B cell (primary cell): ENCODE measurements at regions of chr2 and their contacts with region 1.

Region 1: GRCh38 chr2:219597552-219598307 is at the start of gene STK11IP:
- DNase-seq: peak; percentile 96
- ATAC-seq: peak; percentile 88
- H3K4me3 ChIP-seq: peak within 1 kb of the TSS; percentile 69 to 88 (median 86)
- H3K4me3 Mint-ChIP-seq: peak within 1 kb of the TSS; percentile 98
- H3K27ac ChIP-seq: peak within 1 kb of the TSS; percentile 59 to 88
- H3K27ac Mint-ChIP-seq: peak within 1 kb of the TSS; percentile 98
- H3K4me1 ChIP-seq: peaks cover 10 to 12% of the 10 kb centered on the region in 2 donors
- H3K4me1 Mint-ChIP-seq: peaks cover 23% of the 10 kb centered on the region
- H3K27me3 ChIP-seq: peaks cover 0 to 11% (median 0%) of the 10 kb centered on the region in 4 experiments
- H3K27me3 Mint-ChIP-seq: peaks cover 10% of the 10 kb centered on the region
- CTCF ChIP-seq: no peak
- total RNA-seq, gene STK11IP: 55.6 and 60.8 TPM in 2 replicates

Region 2: GRCh38 chr2:218671654-218672566 is 925.8 kb before region 1 on chr2 and contains the starts of genes RNF25 and STK36:
- CTCF ChIA-PET with region 1: no interaction called
- POLR2A ChIA-PET with region 1: no interaction called
- intact Hi-C with region 1: loop called (anchors 5 kb)
- DNase-seq: peak; percentile 85
- ATAC-seq: peak; percentile 95
- H3K4me3 ChIP-seq: peak within 1 kb of the TSS; percentile 66 to 96 (median 84)
- H3K4me3 Mint-ChIP-seq: peak within 1 kb of the TSS; percentile 97
- H3K27ac ChIP-seq: peak within 1 kb of the TSS; percentile 8 to 84
- H3K27ac Mint-ChIP-seq: peak within 1 kb of the TSS; percentile 91
- H3K4me1 ChIP-seq: peaks cover 14 to 15% of the 10 kb centered on the region in 2 donors
- H3K4me1 Mint-ChIP-seq: peaks cover 20% of the 10 kb centered on the region
- H3K27me3 ChIP-seq: no peaks in the 10 kb centered on the region
- H3K27me3 Mint-ChIP-seq: no peaks in the 10 kb centered on the region
- CTCF ChIP-seq: no peak
- total RNA-seq, gene RNF25: 31.7 and 31.8 TPM in 2 replicates
- total RNA-seq, gene STK36: 41.3 and 42.9 TPM in 2 replicates

Region 3: DNA sequence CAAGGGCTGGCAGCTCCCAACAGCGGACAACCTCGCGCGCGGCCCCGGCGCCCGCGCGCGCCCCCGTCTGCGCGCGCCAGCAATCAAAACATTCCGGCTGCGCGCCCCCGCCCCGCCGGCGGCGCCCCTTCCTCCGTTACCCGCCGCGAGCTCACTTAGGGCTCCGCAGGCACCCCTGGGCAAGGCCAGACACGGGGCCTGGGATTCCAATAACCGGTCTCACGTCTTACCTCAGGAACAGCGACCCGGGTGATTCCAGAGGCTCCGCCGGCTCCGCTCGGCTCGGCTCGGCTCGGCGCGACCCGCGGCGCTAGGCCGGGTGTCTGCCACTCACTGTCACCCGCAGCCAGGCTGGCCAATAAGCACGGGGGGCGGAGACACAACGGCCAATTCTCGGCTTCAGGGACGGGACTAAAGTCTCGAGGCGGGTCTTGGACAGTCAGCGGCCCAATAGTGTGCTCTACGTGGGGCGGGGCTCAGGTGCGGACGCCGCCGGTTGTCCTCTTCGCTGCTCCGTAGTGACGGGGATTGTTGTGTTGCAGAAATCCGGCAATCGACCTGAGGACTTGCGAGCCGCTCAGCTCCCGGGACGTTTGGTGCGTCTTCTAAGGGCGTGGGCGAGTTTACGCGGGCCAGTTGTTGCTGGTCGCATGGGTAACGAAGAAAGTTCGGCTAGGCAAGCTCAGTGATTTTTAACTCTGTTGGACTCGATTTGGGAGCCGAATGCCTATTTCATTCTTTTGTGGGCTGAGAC is 368.2 kb before region 1 on chr2 and contains the starts of genes ANKZF1 and ATG9A:
- CTCF ChIA-PET with region 1: no interaction called
- POLR2A ChIA-PET with region 1: no interaction called
- intact Hi-C with region 1: loop called (anchors 5 kb)
- DNase-seq: peak; percentile 98
- ATAC-seq: peak; percentile 97
- H3K4me3 ChIP-seq: peak within 1 kb of the TSS; percentile 86 to 98 (median 92)
- H3K4me3 Mint-ChIP-seq: peak within 1 kb of the TSS; percentile 99
- H3K27ac ChIP-seq: peak within 1 kb of the TSS; percentile 74 to 87
- H3K27ac Mint-ChIP-seq: peak within 1 kb of the TSS; percentile 98
- H3K4me1 ChIP-seq: peaks cover 17 to 23% of the 10 kb centered on the region in 2 donors
- H3K4me1 Mint-ChIP-seq: peaks cover 38% of the 10 kb centered on the region
- H3K27me3 ChIP-seq: no peaks in the 10 kb centered on the region
- H3K27me3 Mint-ChIP-seq: no peaks in the 10 kb centered on the region
- CTCF ChIP-seq: no peak
- total RNA-seq, gene ANKZF1: 181 and 199 TPM in 2 replicates
- total RNA-seq, gene ATG9A: 59.4 and 65.5 TPM in 2 replicates

Region 4: GRCh38 chr2:219498280-219499057 is 99.3 kb before region 1 on chr2 and contains the start of gene GMPPA:
- CTCF ChIA-PET with region 1: interaction called, 4 read pairs
- POLR2A ChIA-PET with region 1: no interaction called
- intact Hi-C with region 1: loop called (anchors 1 kb)
- DNase-seq: peak; percentile 94
- ATAC-seq: peak; percentile 96
- H3K4me3 ChIP-seq: peak within 1 kb of the TSS; percentile 65 to 90 (median 79)
- H3K4me3 Mint-ChIP-seq: peak within 1 kb of the TSS; percentile 93
- H3K27ac ChIP-seq: peak within 1 kb of the TSS in 1 of 2 donors; percentile 84
- H3K27ac Mint-ChIP-seq: peak within 1 kb of the TSS; percentile 87
- H3K4me1 ChIP-seq: peaks cover 38% of the 10 kb centered on the region in 2 donors
- H3K4me1 Mint-ChIP-seq: peaks cover 32% of the 10 kb centered on the region
- H3K27me3 ChIP-seq: peaks cover 0 to 46% (median 23%) of the 10 kb centered on the region in 4 experiments
- H3K27me3 Mint-ChIP-seq: peaks cover 33% of the 10 kb centered on the region
- CTCF ChIP-seq: no peak
- total RNA-seq, gene GMPPA: 27.8 and 32.0 TPM in 2 replicates

Region 5: GRCh38 chr2:219543601-219544358 is 54.0 kb before region 1 on chr2 and contains the starts of genes CHPF and TMEM198:
- CTCF ChIA-PET with region 1: interaction called, 3 read pairs
- POLR2A ChIA-PET with region 1: no interaction called
- intact Hi-C with region 1: loop called (anchors 1 kb)
- DNase-seq: peak; percentile 93
- ATAC-seq: peak; percentile 80
- H3K4me3 ChIP-seq: peak within 1 kb of the TSS in 4 of 5 experiments; percentile 63 to 78 (median 67)
- H3K4me3 Mint-ChIP-seq: peak within 1 kb of the TSS; percentile 83
- H3K27ac ChIP-seq: peak within 1 kb of the TSS in 1 of 2 donors; percentile 35
- H3K27ac Mint-ChIP-seq: peak within 1 kb of the TSS; percentile 50
- H3K4me1 ChIP-seq: peaks cover 29 to 31% of the 10 kb centered on the region in 2 donors
- H3K4me1 Mint-ChIP-seq: peaks cover 24% of the 10 kb centered on the region
- H3K27me3 ChIP-seq: peaks cover 0 to 82% (median 21%) of the 10 kb centered on the region in 4 experiments
- H3K27me3 Mint-ChIP-seq: peaks cover 40% of the 10 kb centered on the region
- CTCF ChIP-seq: no peak
- total RNA-seq, gene CHPF: 1.2 and 1.3 TPM in 2 replicates
- total RNA-seq, gene TMEM198: 0.39 TPM in 1 of 2 replicates, not detected in the other

Region 6: GRCh38 chr2:219552382-219553167 is 45.2 kb before region 1 on chr2:
- CTCF ChIA-PET with region 1: no interaction called
- POLR2A ChIA-PET with region 1: no interaction called
- intact Hi-C with region 1: loop called (anchors 2 kb)
- DNase-seq: peak; percentile 86
- ATAC-seq: peak; percentile 89
- H3K4me3 ChIP-seq: peak overlapping the region in 4 of 5 experiments; percentile 35 to 52 (median 46)
- H3K4me3 Mint-ChIP-seq: peak overlapping the region; percentile 76
- H3K27ac ChIP-seq: no peak overlapping the region
- H3K27ac Mint-ChIP-seq: no peak overlapping the region
- H3K4me1 ChIP-seq: peaks cover 20 to 30% of the 10 kb centered on the region in 2 donors
- H3K4me1 Mint-ChIP-seq: peaks cover 14% of the 10 kb centered on the region
- H3K27me3 ChIP-seq: peaks cover 0 to 73% (median 23%) of the 10 kb centered on the region in 4 experiments
- H3K27me3 Mint-ChIP-seq: peaks cover 56% of the 10 kb centered on the region
- CTCF ChIP-seq: no peak

Region 7: GRCh38 chr2:219642465-219643080 is 44.8 kb after region 1 on chr2:
- CTCF ChIA-PET with region 1: interaction called, 17 read pairs
- POLR2A ChIA-PET with region 1: no interaction called
- intact Hi-C with region 1: loop called (anchors 1 kb)
- DNase-seq: peak; percentile 96
- ATAC-seq: peak; percentile 100
- H3K4me3 ChIP-seq: peak overlapping the region in 4 of 5 experiments; percentile 10 to 40 (median 27)
- H3K4me3 Mint-ChIP-seq: peak overlapping the region; percentile 75
- H3K27ac ChIP-seq: no peak overlapping the region
- H3K27ac Mint-ChIP-seq: peak overlapping the region; percentile 50
- H3K4me1 ChIP-seq: peaks cover 8 to 17% of the 10 kb centered on the region in 2 donors
- H3K4me1 Mint-ChIP-seq: peaks cover 15% of the 10 kb centered on the region
- H3K27me3 ChIP-seq: peaks cover 0 to 37% (median 4%) of the 10 kb centered on the region in 4 experiments
- H3K27me3 Mint-ChIP-seq: peaks cover 31% of the 10 kb centered on the region
- CTCF ChIP-seq: peak; percentile 99